ENCODE measurements at regions of chr3 and their contacts with region 1.

Region 1: GRCh38 chr3:100634493-100635272 is 25.3 kb downstream of the ADGRG7 start:
- DNase-seq: peak; percentile 74
- H3K4me3 ChIP-seq: no peak overlapping the region
- H3K27ac ChIP-seq: no peak overlapping the region
- H3K4me1 ChIP-seq: no peaks in the 10 kb centered on the region
- H3K27me3 ChIP-seq: no peaks in the 10 kb centered on the region
- CTCF ChIP-seq: peak; percentile 13

Region 2: DNA sequence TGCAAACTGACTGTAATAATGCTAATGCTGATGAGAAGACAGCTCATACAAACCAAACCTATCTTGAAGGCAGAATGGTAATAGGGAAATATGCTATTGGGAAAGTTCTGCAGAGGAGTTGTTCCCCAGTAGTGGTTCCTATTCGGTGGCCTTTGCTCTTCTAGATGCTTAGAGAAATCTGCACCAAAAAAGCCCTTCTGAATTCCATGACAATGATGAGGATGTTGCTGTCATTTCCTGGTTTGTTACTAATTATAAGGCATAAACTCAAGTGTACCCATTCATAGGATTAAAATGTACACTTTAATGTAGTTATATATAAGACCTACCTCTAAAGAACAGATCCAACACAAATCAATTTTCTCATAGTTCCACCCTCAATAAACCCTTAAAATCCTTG is 263.9 kb before region 1 on chr3:
- intact Hi-C with region 1: no loop called
- DNase-seq: no peak
- H3K4me3 ChIP-seq: no peak overlapping the region
- H3K27ac ChIP-seq: no peak overlapping the region
- H3K4me1 ChIP-seq: no peaks in the 10 kb centered on the region
- H3K27me3 ChIP-seq: no peaks in the 10 kb centered on the region
- CTCF ChIP-seq: no peak

Region 3: GRCh38 chr3:100463002-100463401 is 171.7 kb before region 1 on chr3:
- intact Hi-C with region 1: loop called (anchors 10 kb)
- DNase-seq: peak; percentile 42
- H3K4me3 ChIP-seq: no peak overlapping the region
- H3K27ac ChIP-seq: no peak overlapping the region
- H3K4me1 ChIP-seq: no peaks in the 10 kb centered on the region
- H3K27me3 ChIP-seq: no peaks in the 10 kb centered on the region
- CTCF ChIP-seq: peak; percentile 64

Measured in colonic mucosa (tissue), 4 donors.